ENCODE measurements at regions of chr4 and their contacts with region 1.

Region 1: GRCh38 chr4:77586951-77587383 is 18.7 kb upstream of the CXCL13 start:
- DNase-seq: peak; percentile 72
- H3K4me3 Mint-ChIP-seq: peak overlapping the region; percentile 49
- H3K27ac Mint-ChIP-seq: peak overlapping the region; percentile 77
- H3K4me1 Mint-ChIP-seq: peaks cover 61% of the 10 kb centered on the region
- H3K27me3 Mint-ChIP-seq: no peaks in the 10 kb centered on the region

Region 2: DNA sequence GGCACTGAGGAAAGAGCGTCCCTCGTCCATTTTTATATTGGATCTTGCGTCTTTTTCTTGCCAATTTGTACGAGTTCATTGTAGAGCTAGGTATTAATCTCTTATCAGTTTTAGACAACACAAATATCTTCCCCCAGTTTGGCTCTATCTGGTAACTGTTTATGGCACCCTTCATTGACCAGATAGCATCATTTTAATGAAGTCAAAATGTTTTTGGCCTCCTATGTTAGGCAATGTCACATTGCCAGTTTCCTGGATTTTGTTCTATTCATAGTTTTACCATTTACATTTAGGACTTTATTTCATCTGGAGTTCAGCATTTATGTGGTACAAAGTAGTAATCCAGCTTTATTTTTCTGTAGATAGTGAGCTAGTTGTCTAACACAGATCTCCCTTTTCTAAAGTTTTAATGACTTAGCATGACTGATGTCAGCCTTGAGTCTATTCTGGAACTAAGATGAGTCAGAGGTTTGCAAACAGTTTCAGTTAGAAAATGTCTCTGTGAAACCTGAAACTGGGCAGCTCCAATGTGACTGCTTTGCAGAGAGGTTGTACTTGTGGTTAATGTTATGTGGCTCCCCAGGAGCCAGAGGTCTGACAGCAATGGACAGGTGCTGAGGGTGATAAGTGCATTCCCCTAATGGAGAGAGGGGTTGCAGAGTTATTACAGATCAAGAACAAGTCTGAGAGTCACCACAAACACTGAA is 1285.7 kb before region 1 on chr4:
- intact Hi-C with region 1: loop called (anchors 5 kb)
- DNase-seq: peak; percentile 32
- H3K4me3 Mint-ChIP-seq: peak overlapping the region; percentile 7
- H3K27ac Mint-ChIP-seq: no peak overlapping the region
- H3K4me1 Mint-ChIP-seq: peaks cover 62% of the 10 kb centered on the region
- H3K27me3 Mint-ChIP-seq: peaks cover 3% of the 10 kb centered on the region

Region 3: GRCh38 chr4:77156533-77156911 is 430.4 kb before region 1 on chr4:
- intact Hi-C with region 1: loop called (anchors 5 kb)
- DNase-seq: peak; percentile 95
- H3K4me3 Mint-ChIP-seq: peak overlapping the region; percentile 95
- H3K27ac Mint-ChIP-seq: peak overlapping the region; percentile 96
- H3K4me1 Mint-ChIP-seq: peaks cover 35% of the 10 kb centered on the region
- H3K27me3 Mint-ChIP-seq: no peaks in the 10 kb centered on the region

Region 4: DNA sequence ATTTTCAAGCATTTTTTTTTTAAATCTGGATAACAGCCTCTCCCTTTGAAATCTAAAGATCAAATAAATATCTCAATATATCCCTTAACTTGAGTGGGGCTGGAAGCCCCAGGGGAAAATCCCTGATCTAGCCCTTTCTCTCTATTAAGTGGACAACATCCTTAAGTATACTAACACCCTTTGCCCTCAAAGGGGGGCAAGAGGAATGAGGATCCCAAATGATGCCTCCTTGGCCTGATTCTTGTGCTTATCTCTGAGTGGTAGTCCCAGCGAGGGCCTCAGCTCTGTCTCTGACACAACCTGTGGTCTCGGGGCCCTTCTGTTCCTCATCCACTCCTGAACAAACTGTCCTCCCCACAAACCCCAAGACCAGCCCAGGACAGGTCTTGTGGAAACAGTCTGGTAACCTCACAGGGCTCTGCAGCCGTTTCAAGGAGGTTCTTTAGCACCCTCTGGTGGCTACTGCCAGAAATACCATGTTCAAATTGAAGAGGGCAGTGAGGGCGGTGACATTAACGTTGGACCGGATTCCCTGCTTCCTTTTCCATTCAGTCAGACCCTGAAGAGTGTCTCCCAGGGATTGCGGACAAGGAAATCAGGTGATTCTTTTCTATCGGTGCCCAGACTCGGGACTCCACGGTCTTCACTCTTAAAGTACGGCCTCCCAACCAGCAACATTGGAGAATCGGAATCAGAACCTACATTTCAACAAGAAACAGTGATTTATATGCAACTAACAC is 31.6 kb after region 1 on chr4:
- intact Hi-C with region 1: loop called (anchors 2 kb)
- DNase-seq: peak; percentile 45
- H3K4me3 Mint-ChIP-seq: no peak overlapping the region
- H3K27ac Mint-ChIP-seq: peak overlapping the region; percentile 19
- H3K4me1 Mint-ChIP-seq: peaks cover 7% of the 10 kb centered on the region
- H3K27me3 Mint-ChIP-seq: peaks cover 24% of the 10 kb centered on the region

Region 5: DNA sequence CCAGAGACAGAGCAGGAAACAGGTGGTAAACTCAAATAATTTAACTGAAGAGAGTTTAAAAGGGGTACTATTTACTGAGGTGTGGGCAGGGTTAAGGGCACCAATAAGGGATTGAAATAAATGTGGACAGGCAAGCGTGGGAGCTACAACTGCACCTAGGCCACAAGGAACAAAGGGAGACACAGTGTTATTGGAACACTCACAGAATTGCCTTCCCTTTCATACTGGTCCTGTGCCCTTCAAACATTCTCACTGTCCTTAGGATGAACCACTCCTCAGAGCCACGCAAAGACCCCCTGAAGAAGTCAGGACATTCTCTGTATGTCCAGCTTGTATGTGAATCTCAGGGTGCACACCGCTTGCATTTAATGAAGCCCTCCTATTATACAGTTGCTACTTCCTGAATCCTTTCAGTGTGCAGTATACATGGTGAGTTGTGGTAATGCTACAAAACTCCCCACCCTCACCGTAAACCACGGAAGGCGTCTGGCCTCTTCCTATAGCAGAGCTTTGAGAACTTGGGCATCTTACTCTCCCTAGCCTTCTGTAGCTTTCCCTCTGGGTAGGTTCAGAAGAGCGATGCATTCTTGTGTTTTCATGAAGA is 266.0 kb after region 1 on chr4:
- intact Hi-C with region 1: loop called (anchors 2 kb)
- DNase-seq: peak; percentile 72
- H3K4me3 Mint-ChIP-seq: peak overlapping the region; percentile 56
- H3K27ac Mint-ChIP-seq: peak overlapping the region; percentile 93
- H3K4me1 Mint-ChIP-seq: peaks cover 56% of the 10 kb centered on the region
- H3K27me3 Mint-ChIP-seq: no peaks in the 10 kb centered on the region

Region 6: GRCh38 chr4:78656968-78657445 is 1070.0 kb after region 1 on chr4:
- intact Hi-C with region 1: loop called (anchors 1 kb)
- DNase-seq: peak; percentile 24
- H3K4me3 Mint-ChIP-seq: peak overlapping the region; percentile 51
- H3K27ac Mint-ChIP-seq: peak overlapping the region; percentile 48
- H3K4me1 Mint-ChIP-seq: peaks cover 61% of the 10 kb centered on the region
- H3K27me3 Mint-ChIP-seq: no peaks in the 10 kb centered on the region

Measured in activated T-helper 1 cell treated with anti-CD3 and anti-CD28 coated beads, Interleukin-12 subunit alpha, Interleukin-12 subunit beta, Interleukin-2, Interleukin-4 antibody, amounts not matched to agents 30 ng/mL and 10 ng/mL and 1 ng/mL, durations not matched to agents 14 hours and 24 hours and 36 hours (primary cell).